ENCODE measurements at regions of chrX and their contacts with region 1.

Region 1: GRCh38 chrX:130079824-130080406 is 30.4 kb downstream of the ELF4 start:
- DNase-seq: peak; percentile 62
- ATAC-seq: no peak
- H3K4me3 Mint-ChIP-seq: no peak overlapping the region
- H3K27ac Mint-ChIP-seq: peak overlapping the region; percentile 45
- H3K4me1 Mint-ChIP-seq: peaks cover 50% of the 10 kb centered on the region
- H3K27me3 Mint-ChIP-seq: no peaks in the 10 kb centered on the region

Region 2: GRCh38 chrX:130049821-130050220 is 30.1 kb before region 1 on chrX:
- CTCF ChIA-PET with region 1: no interaction called
- DNase-seq: no peak
- ATAC-seq: no peak
- H3K4me3 Mint-ChIP-seq: no peak overlapping the region
- H3K27ac Mint-ChIP-seq: no peak overlapping the region
- H3K4me1 Mint-ChIP-seq: no peaks in the 10 kb centered on the region
- H3K27me3 Mint-ChIP-seq: no peaks in the 10 kb centered on the region

Region 3: GRCh38 chrX:130060122-130061069 is 19.5 kb before region 1 on chrX:
- CTCF ChIA-PET with region 1: interaction called, 16 read pairs
- DNase-seq: peak; percentile 85
- ATAC-seq: peak; percentile 95
- H3K4me3 Mint-ChIP-seq: peak overlapping the region; percentile 73
- H3K27ac Mint-ChIP-seq: peak overlapping the region; percentile 81
- H3K4me1 Mint-ChIP-seq: peaks cover 7% of the 10 kb centered on the region
- H3K27me3 Mint-ChIP-seq: no peaks in the 10 kb centered on the region

Region 4: GRCh38 chrX:130110379-130111219 is 30.7 kb after region 1 on chrX and contains the start of gene ELF4:
- CTCF ChIA-PET with region 1: interaction called, 38 read pairs
- DNase-seq: peak; percentile 60
- ATAC-seq: peak; percentile 65
- H3K4me3 Mint-ChIP-seq: peak within 1 kb of the TSS; percentile 93
- H3K27ac Mint-ChIP-seq: peak within 1 kb of the TSS; percentile 94
- H3K4me1 Mint-ChIP-seq: peaks cover 44% of the 10 kb centered on the region
- H3K27me3 Mint-ChIP-seq: no peaks in the 10 kb centered on the region
- total RNA-seq, gene ELF4: 36.2 to 52.7 TPM

Region 5: GRCh38 chrX:130159776-130160175 is 79.9 kb after region 1 on chrX:
- CTCF ChIA-PET with region 1: interaction called, 12 read pairs
- DNase-seq: no peak
- ATAC-seq: no peak
- H3K4me3 Mint-ChIP-seq: no peak overlapping the region
- H3K27ac Mint-ChIP-seq: no peak overlapping the region
- H3K4me1 Mint-ChIP-seq: peaks cover 32% of the 10 kb centered on the region
- H3K27me3 Mint-ChIP-seq: no peaks in the 10 kb centered on the region

Region 6: GRCh38 chrX:130196466-130196865 is 116.6 kb after region 1 on chrX:
- CTCF ChIA-PET with region 1: interaction called, 77 read pairs
- DNase-seq: no peak
- ATAC-seq: no peak
- H3K4me3 Mint-ChIP-seq: no peak overlapping the region
- H3K27ac Mint-ChIP-seq: no peak overlapping the region
- H3K4me1 Mint-ChIP-seq: peaks cover 15% of the 10 kb centered on the region
- H3K27me3 Mint-ChIP-seq: no peaks in the 10 kb centered on the region

Measured in activated CD8-positive, alpha-beta memory T cell treated with anti-CD3 and anti-CD28 coated beads, Interleukin-2, amount 10 ng/mL, durations not matched to agents 7 days and 5 days (primary cell).